Motor neuron (in vitro differentiated cells): ENCODE measurements at regions of chr6 and their contacts with region 1.

Region 1: GRCh38 chr6:12648171-12648570 is 68.4 kb upstream of the PHACTR1 start:
- ATAC-seq: no peak
- H3K4me3 ChIP-seq: no peak overlapping the region
- H3K27ac ChIP-seq: no peak overlapping the region
- H3K4me1 ChIP-seq: no peaks in the 10 kb centered on the region

Region 2: GRCh38 chr6:12903246-12903645 is 255.1 kb after region 1 on chr6:
- in situ Hi-C with region 1: loop called in 6 of 9 experiments (anchors 10 to 25 kb)
- ATAC-seq: no peak
- H3K4me3 ChIP-seq: no peak overlapping the region
- H3K27ac ChIP-seq: no peak overlapping the region
- H3K4me1 ChIP-seq: no peaks in the 10 kb centered on the region